ENCODE measurements at regions of chr20 and their contacts with region 1.

Region 1: DNA sequence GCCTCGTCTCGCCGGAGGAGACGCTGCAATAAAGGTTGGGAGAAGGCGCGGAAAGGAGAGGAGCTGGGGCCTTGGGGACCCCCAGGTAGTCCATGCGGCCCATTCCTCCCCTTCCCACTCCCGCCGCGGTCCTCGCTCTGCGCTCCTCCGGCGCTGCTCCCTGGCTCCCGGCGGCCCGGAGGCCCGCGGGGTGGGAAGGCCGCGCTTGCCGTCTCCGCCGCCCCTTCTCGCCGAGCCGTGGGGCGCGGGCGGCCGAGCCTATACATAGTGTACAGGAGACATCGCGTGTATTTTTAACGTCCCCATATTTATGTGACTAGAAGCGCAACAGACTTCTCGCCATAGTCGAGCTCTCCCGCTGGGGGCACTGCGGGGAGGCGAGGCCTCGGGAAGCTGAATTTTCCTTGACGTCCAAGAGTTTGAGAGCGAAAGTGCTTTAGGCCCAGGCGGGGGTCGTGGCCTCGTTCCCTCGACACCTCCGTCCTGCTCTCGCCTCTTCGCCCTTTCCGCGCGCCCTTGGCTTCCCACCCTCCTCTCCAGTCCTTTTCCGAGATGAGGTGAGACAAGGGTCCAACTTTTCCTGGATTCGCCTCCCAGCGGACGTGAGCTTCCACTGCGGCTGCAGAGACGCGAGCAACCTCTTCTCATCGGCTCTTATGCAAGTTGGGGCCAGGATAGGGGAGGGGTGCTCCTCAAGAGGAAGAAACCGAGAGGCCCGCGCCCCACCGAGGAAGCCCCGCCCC is 29.0 kb downstream of the SLC12A5 start:
- H3K4me3 Mint-ChIP-seq: peak overlapping the region; percentile 77
- H3K27ac Mint-ChIP-seq: peak overlapping the region; percentile 85
- H3K4me1 Mint-ChIP-seq: peaks cover 62% of the 10 kb centered on the region
- H3K27me3 Mint-ChIP-seq: peaks cover 45% of the 10 kb centered on the region

Region 2: DNA sequence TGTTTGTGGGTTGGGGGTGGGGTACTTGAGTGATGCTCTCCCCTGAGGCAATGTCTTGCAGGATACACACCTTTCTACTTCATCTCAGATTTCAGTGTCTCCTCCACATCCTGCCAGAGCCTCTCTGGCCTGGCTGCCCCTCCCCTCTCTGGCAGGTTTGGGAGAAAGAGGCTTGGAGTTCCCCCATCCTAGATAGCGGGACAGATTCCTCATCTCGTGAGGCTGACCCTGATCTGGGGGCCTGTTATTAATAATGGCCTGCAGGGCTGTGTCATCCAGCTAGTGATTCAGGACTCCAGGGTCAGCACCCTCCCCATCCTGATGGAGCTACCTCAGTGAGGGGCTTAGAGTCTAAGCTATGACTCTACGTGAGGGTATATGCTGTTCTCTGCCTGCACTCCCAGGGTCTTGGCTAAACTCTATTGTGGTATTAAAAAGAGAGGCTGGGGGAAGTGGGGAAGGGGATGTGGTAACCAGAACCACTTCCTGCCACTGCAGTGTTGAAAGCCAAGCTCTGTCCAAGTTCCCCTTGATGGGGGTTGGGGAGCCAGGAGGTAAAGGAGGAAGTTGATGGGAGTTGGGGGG is 53.0 kb before region 1 on chr20:
- intact Hi-C with region 1: no loop called
- H3K4me3 Mint-ChIP-seq: peak overlapping the region; percentile 60
- H3K27ac Mint-ChIP-seq: peak overlapping the region; percentile 99
- H3K4me1 Mint-ChIP-seq: peaks cover 93% of the 10 kb centered on the region
- H3K27me3 Mint-ChIP-seq: no peaks in the 10 kb centered on the region

Region 3: GRCh38 chr20:46040902-46041535 is 17.0 kb before region 1 on chr20:
- intact Hi-C with region 1: no loop called
- H3K4me3 Mint-ChIP-seq: no peak overlapping the region
- H3K27ac Mint-ChIP-seq: no peak overlapping the region
- H3K4me1 Mint-ChIP-seq: no peaks in the 10 kb centered on the region
- H3K27me3 Mint-ChIP-seq: peaks cover 60% of the 10 kb centered on the region

Region 4: GRCh38 chr20:46117704-46118467 is 59.9 kb after region 1 on chr20 and contains the start of gene CD40:
- intact Hi-C with region 1: loop called (anchors 2 kb)
- H3K4me3 Mint-ChIP-seq: peak within 1 kb of the TSS; percentile 98
- H3K27ac Mint-ChIP-seq: peak within 1 kb of the TSS; percentile 89
- H3K4me1 Mint-ChIP-seq: peaks cover 75% of the 10 kb centered on the region
- H3K27me3 Mint-ChIP-seq: peaks cover 7% of the 10 kb centered on the region

Measured in dendritic cell treated with granulocyte-macrophage colony-stimulating factor and Interleukin-4, amounts not matched to agents 40 ng/mL and 50 ng/mL, for 4 days (primary cell).